ENCODE measurements at regions of chr11 and their contacts with region 1.

Region 1: DNA sequence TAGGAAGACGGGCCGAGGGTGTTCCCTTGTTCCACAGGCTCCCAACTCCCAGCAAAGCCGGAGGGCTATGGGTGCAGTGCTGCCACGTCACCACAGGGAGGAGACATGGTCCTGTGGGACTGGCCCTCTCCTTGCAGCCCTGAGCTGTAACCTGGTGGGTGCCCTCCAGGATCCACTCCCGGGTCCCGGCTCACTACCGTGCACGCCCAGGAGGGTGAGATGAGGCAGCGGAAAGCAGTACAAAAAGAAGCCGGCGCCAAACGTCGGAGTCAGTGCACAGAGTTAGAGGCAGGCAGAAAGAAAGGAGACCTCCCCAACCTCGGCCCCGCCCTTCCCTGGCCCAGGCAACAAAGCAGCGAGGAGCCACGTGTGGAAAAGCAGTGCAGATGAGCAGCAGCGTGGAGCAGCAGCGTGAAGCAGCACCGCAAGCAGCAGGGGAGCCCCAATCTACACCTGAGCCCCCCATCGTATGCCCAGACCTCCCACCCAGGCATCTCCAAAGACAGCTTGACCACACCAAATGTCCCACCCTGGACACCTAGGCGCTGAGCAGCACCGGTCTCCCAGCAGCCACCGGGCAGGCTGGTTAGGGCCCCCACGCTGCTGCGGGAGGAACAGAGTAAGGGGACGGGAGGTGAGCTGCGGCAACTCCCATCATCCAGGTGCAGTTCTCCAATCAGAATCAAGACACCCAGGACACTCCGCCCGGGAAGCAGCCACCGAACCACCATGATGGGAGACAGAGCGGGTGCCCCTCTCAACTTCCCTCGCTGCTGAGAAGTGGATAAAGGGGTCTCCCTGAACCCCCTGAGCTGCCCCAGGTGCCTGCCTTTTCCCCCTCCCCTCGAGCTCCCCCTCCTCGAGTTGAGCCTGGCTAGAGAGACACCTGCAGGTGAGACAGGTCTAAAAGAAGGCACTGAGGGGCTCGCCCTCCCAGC is 28.8 kb downstream of the IGSF9B start:
- DNase-seq: peak; percentile 83
- ATAC-seq: peak; percentile 85
- H3K4me3 Mint-ChIP-seq: no peak overlapping the region
- H3K27ac Mint-ChIP-seq: peak overlapping the region; percentile 68
- H3K4me1 Mint-ChIP-seq: peaks cover 7% of the 10 kb centered on the region
- H3K27me3 Mint-ChIP-seq: no peaks in the 10 kb centered on the region
- CTCF ChIP-seq: peak; percentile 71

Region 2: GRCh38 chr11:133843454-133843987 is 84.4 kb before region 1 on chr11:
- CTCF ChIA-PET with region 1: no interaction called
- POLR2A ChIA-PET with region 1: no interaction called
- DNase-seq: no peak
- ATAC-seq: no peak
- H3K4me3 Mint-ChIP-seq: no peak overlapping the region
- H3K27ac Mint-ChIP-seq: no peak overlapping the region
- H3K4me1 Mint-ChIP-seq: no peaks in the 10 kb centered on the region
- H3K27me3 Mint-ChIP-seq: peaks cover 5% of the 10 kb centered on the region; the same call in 1 of the 2 replicates
- CTCF ChIP-seq: no peak

Region 3: DNA sequence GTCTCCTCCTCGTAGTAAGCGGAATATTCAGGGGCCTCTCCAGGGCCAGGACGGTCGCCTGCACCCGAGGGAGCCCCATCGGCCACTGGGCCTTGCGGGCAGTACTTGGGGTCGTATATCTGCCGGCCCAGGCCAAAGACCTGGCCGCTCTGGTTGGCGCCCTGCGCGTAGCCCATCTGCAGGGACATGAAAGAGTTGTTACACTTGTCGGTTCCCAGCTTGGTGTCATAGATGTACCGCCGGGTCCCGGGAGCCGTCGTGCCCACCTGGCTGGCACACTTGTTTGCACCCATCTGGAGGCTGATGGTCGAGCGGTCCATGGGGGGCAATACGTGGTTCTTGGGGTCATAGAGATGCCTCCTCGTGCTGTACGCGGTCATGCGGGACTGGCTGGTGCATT is 63.2 kb before region 1 on chr11:
- CTCF ChIA-PET with region 1: no interaction called
- POLR2A ChIA-PET with region 1: no interaction called
- DNase-seq: no peak
- ATAC-seq: no peak
- H3K4me3 Mint-ChIP-seq: no peak overlapping the region
- H3K27ac Mint-ChIP-seq: no peak overlapping the region
- H3K4me1 Mint-ChIP-seq: no peaks in the 10 kb centered on the region
- H3K27me3 Mint-ChIP-seq: no peaks in the 10 kb centered on the region
- CTCF ChIP-seq: no peak

Region 4: GRCh38 chr11:133947321-133947756 is 19.4 kb after region 1 on chr11:
- CTCF ChIA-PET with region 1: interaction called, 37 read pairs
- POLR2A ChIA-PET with region 1: no interaction called
- DNase-seq: peak; percentile 76
- ATAC-seq: peak; percentile 65
- H3K4me3 Mint-ChIP-seq: no peak overlapping the region
- H3K27ac Mint-ChIP-seq: no peak overlapping the region
- H3K4me1 Mint-ChIP-seq: peaks cover 59% of the 10 kb centered on the region
- H3K27me3 Mint-ChIP-seq: no peaks in the 10 kb centered on the region
- CTCF ChIP-seq: no peak

Region 5: DNA sequence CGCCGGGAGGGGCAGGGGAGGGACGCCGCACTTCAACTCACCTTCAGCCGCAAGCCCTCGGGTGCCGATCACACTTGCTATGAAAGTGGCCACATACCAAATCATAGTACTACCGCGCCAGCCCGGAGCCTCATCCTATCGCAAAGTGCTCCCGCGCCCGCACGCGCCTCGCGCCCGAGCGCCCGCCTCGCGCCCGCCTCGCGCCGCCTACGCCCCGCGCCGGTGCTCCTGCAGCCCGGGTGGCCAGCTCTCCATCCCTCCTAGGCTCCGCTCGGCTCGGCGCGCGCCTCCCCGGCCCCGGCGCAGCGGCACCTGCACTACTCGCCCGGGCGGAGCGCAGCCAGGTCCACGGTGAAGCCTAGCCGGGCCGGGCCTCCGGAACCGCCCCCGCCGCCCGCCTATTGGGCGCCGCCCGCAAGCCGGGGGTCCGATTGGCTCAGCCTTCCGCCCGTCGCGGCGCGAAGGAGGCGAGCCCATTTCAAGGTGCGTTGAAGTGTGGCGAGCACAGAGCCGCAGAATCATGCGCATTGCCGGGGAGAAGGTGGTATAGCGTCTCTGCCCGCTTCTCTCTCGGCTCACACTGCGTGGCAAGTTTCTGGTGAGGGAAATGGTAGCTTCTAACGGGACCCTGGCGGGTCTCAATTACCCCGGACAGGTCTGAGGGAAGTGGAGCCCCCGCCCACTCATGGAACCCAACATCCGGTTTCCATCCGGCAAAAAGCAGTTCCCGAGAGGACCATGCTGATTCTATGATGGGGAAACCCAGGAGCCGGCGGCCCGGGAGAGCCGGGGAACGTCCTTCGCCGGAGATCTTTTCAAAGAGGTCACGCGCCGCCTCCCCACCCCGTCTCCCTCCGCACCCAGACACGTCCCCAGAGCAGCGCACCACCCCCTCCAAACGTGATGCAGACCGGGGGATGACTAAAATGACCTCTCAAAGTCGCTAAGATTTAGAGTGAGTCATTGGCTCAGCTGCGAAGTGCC is 29.0 kb after region 1 on chr11 and contains the start of gene IGSF9B:
- CTCF ChIA-PET with region 1: interaction called, 17 read pairs
- POLR2A ChIA-PET with region 1: no interaction called
- DNase-seq: peak; percentile 91
- ATAC-seq: peak; percentile 92
- H3K4me3 Mint-ChIP-seq: peak within 1 kb of the TSS; percentile 86
- H3K27ac Mint-ChIP-seq: peak within 1 kb of the TSS; percentile 79; the same call in 1 of the 2 replicates
- H3K4me1 Mint-ChIP-seq: peaks cover 47% of the 10 kb centered on the region
- H3K27me3 Mint-ChIP-seq: peaks cover 49% of the 10 kb centered on the region
- CTCF ChIP-seq: no peak
- total RNA-seq, gene IGSF9B: 52.7 to 57.1 TPM (median 55.2 TPM) in 3 replicates

Region 6: GRCh38 chr11:133984828-133985227 is 56.9 kb after region 1 on chr11:
- CTCF ChIA-PET with region 1: interaction called, 11 read pairs
- POLR2A ChIA-PET with region 1: no interaction called
- DNase-seq: no peak
- ATAC-seq: no peak
- H3K4me3 Mint-ChIP-seq: no peak overlapping the region
- H3K27ac Mint-ChIP-seq: no peak overlapping the region
- H3K4me1 Mint-ChIP-seq: no peaks in the 10 kb centered on the region
- H3K27me3 Mint-ChIP-seq: no peaks in the 10 kb centered on the region; the same call in 1 of the 2 replicates
- CTCF ChIP-seq: no peak

Region 7: DNA sequence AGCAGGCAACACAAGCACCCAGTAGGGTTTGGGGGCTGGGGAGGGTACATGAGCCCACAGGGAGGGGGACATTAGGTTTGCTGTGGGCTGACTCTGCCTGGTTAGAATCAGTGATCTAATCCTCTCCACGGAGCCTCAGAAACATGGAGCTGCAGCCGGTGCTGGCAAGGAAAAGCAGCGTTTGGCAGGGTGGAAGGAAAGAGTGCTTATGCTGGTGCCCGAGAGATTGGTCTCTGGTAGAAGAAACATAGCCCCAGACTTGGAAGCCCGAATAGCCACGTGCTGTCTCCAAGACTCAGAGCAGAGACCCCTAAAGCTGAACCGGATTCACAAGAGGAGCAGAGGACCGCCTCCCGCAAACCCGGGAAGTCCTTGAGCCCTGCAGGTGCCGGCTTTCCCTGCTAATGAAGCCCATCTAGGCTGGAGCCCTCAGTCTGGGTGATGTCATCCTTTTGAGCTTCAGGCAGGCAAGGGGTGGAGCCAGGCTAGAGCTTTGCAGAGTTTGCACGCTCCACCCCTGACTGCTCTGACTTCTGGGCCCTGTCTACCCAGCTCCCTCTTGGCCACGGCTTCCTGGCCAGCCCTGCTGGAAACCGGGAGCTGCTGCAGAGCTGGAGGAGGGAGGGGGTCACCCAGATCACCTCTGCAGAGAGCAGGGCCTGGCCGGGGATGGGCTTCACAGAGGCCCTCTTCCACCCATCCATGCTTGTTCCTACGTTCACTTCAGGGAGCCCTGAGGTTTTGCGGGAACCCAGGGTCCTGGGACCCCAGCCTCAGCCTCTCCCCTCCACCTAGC is 105.9 kb after region 1 on chr11:
- CTCF ChIA-PET with region 1: interaction called, 24 read pairs
- POLR2A ChIA-PET with region 1: no interaction called
- DNase-seq: peak; percentile 83
- ATAC-seq: peak; percentile 87
- H3K4me3 Mint-ChIP-seq: peak overlapping the region; percentile 50
- H3K27ac Mint-ChIP-seq: peak overlapping the region; percentile 88
- H3K4me1 Mint-ChIP-seq: peaks cover 57% of the 10 kb centered on the region
- H3K27me3 Mint-ChIP-seq: peaks cover 23% of the 10 kb centered on the region
- CTCF ChIP-seq: no peak

Region 8: DNA sequence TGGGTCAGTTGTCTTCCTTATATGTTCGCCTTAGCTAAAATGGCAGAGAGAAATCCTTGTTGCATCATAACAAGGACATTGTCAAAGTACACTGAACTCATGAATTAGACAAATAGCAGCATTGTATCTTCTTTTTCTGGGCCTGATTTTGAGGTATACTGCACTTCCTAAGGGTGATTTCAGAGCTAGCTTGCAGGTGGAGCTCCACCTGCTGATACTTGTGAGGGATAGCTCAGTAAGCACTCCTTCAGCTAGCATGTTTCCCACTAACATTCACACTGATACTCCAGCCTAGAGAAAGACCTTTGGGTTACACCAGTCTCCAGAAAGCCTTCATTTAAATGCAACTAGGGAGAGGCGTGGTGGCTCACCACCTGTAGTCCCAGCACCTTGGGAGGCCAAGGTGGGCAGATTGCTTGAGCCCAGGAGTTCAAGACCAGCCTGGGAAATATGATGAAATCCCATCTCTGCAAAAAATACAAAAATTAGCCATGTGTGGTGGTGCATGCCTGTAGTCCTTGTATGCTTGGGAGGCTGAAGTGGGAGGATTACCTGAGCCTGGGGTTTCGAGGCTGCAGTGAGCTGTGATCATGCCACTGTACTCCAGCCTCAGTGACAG is 170.7 kb after region 1 on chr11:
- CTCF ChIA-PET with region 1: interaction called, 11 read pairs
- POLR2A ChIA-PET with region 1: no interaction called
- DNase-seq: no peak
- ATAC-seq: peak; percentile 98
- H3K4me3 Mint-ChIP-seq: no peak overlapping the region
- H3K27ac Mint-ChIP-seq: 0 out of 2 replicates have a peak overlapping the region, but pooled peaks have one; percentile 50
- H3K4me1 Mint-ChIP-seq: peaks cover 23% of the 10 kb centered on the region
- H3K27me3 Mint-ChIP-seq: peaks cover 8% of the 10 kb centered on the region
- CTCF ChIP-seq: no peak

Region 9: GRCh38 chr11:134196756-134197155 is 268.8 kb after region 1 on chr11:
- CTCF ChIA-PET with region 1: no interaction called
- POLR2A ChIA-PET with region 1: no interaction called
- DNase-seq: no peak
- ATAC-seq: no peak
- H3K4me3 Mint-ChIP-seq: no peak overlapping the region
- H3K27ac Mint-ChIP-seq: no peak overlapping the region
- H3K4me1 Mint-ChIP-seq: peaks cover 11% of the 10 kb centered on the region
- H3K27me3 Mint-ChIP-seq: no peaks in the 10 kb centered on the region
- CTCF ChIP-seq: no peak

Region 10: DNA sequence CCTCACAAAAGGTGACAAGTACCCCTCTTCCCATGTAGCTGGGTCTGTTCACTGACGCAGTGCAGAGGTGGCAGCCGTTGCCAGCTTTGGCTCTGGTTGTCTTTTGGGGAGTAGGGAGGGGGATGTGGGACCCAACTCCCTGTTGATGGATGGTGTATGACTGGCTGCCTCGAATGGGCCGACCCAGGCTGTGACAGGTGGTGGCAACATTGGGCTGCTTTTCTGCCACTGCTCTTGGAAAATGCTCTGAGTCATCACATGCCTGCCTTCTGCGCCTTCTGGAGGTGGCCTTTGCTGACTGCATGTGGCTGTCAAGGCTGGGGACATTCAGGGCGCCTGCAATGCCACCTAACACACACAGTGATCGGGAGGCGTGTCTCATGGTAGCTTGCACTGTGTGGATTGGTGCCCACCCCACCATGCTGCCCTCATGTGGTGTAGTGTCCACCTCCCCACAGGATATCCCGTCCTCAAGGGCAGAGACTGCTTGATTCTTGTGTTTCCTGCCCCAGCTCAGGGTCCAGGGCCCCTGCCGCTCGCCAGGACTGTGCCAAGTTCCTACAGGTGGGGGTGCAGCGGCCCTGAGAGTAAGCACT is 511.3 kb after region 1 on chr11:
- CTCF ChIA-PET with region 1: no interaction called
- POLR2A ChIA-PET with region 1: no interaction called
- DNase-seq: no peak
- ATAC-seq: no peak
- H3K4me3 Mint-ChIP-seq: no peak overlapping the region
- H3K27ac Mint-ChIP-seq: no peak overlapping the region
- H3K4me1 Mint-ChIP-seq: peaks cover 9% of the 10 kb centered on the region
- H3K27me3 Mint-ChIP-seq: no peaks in the 10 kb centered on the region; the same call in 1 of the 2 replicates
- CTCF ChIP-seq: no peak